Activated CD4-positive, alpha-beta memory T cell treated with anti-CD3 and anti-CD28 coated beads for 36 hours (primary cell): ENCODE measurements at regions of chr22 and their contacts with region 1.

Region 1: DNA sequence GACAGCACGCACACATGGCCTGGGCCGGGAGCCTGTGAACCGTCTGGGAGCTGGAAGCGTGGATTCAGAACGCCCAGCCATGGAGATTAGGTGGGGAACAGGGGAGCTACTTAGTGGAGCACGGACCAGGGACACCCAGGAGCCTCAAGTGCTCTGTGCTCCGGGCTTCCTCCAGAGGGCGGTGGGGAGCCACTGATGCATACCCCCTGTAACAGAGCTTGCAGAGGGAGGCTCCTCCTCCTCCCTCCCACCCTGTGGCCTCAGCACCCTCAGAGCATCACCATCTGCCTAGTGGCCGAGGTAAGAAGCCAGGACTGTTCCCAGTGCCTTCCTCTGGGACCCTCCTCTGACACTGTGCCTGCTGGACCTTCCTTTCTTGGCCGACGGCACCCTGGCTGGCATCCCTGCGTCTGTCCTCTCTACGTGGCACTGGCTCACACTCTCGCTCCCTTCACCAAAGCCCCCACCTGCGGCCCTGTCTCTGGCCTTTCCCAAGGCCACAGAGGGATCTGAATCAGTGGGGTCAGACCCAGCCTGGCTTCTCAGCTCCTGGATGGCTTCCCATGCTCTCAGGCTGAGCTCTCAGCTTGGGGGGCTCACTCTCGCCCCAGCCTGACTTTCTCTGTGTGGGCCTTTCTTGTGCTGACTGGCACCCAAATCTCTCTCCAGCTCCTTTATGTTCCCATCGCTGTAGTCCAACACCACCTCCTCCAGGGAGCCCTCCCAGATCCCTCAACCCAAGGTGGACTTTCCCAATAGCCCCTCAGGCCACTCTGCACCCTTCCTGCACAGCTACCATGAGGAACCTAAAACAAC is 780.9 kb downstream of the BRD1 start:
- DNase-seq: peak; percentile 49
- H3K4me3 Mint-ChIP-seq: no peak overlapping the region
- H3K27ac Mint-ChIP-seq: no peak overlapping the region
- H3K4me1 Mint-ChIP-seq: no peaks in the 10 kb centered on the region
- H3K27me3 Mint-ChIP-seq: peaks cover 3% of the 10 kb centered on the region

Region 2: DNA sequence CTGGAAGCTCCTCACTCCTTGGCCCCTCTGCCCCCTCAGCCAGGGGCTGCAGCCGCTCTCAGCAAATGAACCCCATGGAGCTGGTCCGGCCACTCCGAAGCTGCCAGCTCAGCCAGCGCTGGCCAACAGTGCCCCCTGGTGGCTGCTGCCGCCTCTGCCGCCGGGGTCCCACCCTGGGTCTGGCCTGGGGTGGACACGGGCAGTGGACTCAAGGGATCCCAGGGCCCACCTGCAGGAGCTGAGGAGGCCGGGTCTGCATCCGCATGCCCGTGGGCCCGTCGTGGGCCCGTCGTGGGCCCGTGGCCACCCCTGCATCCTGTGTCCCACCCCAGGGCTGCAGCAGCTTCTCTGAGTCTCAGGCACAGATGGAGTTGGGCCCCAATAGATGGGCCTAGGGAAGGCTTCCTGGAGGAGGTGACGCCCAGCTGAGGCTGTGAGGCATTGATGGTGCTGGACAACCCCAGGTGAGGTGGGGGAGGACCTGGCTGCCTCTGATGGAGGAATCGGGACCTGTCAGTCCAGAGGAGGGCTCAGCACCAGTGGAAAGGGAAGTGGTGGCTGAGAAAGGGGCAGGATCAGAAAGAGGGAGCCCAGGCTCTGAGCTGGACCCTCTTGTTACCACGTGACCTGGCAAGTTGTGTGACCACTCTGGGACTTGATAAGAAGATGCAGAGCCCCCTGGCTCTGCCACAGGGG is 258.6 kb after region 1 on chr22:
- CTCF ChIA-PET with region 1: interaction called, 28 read pairs
- POLR2A ChIA-PET with region 1: no interaction called
- intact Hi-C with region 1: no loop called
- DNase-seq: peak; percentile 69
- H3K4me3 Mint-ChIP-seq: no peak overlapping the region
- H3K27ac Mint-ChIP-seq: no peak overlapping the region
- H3K4me1 Mint-ChIP-seq: no peaks in the 10 kb centered on the region
- H3K27me3 Mint-ChIP-seq: peaks cover 18% of the 10 kb centered on the region